Posterior cingulate gyrus (tissue), 11 donors: ENCODE measurements at regions of chr6 and their contacts with region 1.

Region 1: DNA sequence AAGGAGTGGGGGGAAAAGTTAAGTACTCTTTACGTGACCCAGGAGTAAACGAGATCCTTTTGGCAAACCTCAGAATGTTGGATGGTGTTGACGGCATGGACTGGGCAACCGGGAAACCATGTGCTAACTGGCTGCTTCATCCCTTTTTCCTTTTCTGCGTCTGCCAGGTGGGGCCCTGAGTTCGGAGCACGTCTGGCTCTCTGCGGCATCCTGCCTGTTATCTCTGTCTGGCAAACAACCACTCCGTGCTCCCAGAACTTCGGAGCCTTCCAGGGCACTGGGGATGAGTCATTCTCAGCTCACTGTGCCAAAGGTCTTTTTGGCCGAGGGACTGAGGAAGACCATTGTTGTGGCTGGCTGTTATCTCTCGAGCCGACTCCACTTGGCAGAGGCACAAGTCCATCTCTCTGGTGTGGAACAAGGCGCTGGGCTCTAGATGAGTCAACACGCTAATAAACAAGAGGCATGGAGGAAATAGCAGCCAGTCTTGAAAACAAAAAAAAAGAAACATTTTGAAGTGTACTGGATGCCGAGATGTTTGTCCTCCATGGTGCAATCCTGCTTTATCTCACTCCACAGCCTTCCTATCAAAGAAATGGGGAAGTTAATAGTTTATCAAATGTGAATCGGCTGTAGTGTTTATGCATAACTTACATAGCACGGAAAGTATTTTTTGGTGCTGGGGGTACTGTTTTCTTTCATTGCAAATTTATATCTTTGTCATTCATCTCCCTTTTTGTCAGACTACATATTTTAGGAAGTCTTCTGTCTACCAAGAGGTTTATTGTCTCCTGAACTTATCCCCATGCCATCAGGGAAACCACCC is 64.6 kb upstream of the TXNDC5 start:
- DNase-seq: peak; percentile 52 to 96 (median 80)

Region 2: GRCh38 chr6:7910654-7911344 is 64.4 kb before region 1 on chr6 and contains the start of gene TXNDC5:
- intact Hi-C with region 1: loop called (anchors 5 kb)
- DNase-seq: peak; percentile 64 to 97 (median 78)

Region 3: GRCh38 chr6:8006208-8006607 is 31.1 kb after region 1 on chr6:
- intact Hi-C with region 1: no loop called
- DNase-seq: no peak

Region 4: GRCh38 chr6:8329562-8329961 is 354.4 kb after region 1 on chr6:
- intact Hi-C with region 1: no loop called
- DNase-seq: no peak